ENCODE measurements at regions of chr19 and their contacts with region 1.

Region 1: DNA sequence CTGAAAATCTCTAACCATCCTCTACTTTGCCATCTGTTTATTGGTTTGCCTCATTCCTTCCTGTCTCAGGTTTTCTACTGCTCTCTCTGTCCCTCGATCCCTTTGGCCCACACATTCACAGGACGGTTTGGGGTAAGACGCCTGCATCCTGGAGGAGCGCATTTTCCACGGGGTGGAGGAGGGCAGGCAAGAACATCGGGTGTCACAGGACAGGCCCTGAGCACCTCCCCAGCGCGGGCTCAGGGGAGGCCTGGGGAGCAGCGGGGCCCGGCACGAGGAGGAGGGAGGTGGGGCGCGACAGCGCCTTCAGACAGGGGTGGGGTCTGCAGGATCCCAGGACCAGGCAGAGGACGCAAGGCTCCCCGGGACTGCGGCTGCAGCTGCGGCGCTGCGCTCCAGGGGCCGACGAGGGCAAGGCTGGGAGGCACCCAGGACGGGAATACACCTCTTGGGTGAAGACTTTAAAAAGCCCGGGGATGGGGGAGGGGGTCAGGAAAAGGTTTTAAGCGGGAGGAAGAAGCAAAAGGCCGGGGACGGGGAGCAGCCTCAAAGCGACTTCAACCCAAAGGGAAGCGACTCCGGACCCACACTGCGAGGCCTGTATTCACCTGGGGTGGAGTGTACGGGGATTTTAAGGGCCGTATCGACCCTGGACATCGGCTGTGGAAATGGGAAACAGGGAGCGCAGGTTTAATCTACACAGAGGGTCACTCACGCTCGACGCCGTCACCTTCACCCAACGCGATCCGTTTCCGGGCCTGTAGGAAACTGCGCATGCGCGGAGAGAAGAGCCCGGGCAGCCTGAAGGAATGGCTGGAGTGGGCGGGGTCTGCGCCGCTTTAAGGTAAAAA is at the start of gene ZNF415:
- DNase-seq: peak; percentile 87 to 89
- ATAC-seq: peak; percentile 90 to 96 (median 95)
- H3K4me3 ChIP-seq: peak within 1 kb of the TSS; percentile 44 to 75 (median 66)
- H3K27ac ChIP-seq: peak within 1 kb of the TSS; percentile 34 to 92 (median 86)
- H3K4me1 ChIP-seq: peaks cover 9 to 29% (median 22%) of the 10 kb centered on the region in 9 donors
- H3K27me3 ChIP-seq: peaks cover 0 to 3% (median 0%) of the 10 kb centered on the region in 7 donors
- CTCF ChIP-seq: no peak
- total RNA-seq, gene ZNF415: 18.7 to 32.5 (median 22.8) TPM

Region 2: GRCh38 chr19:53076977-53077376 is 55.4 kb before region 1 on chr19:
- intact Hi-C with region 1: loop called in 2 of 10 experiments (anchors 2 to 5 kb)
- DNase-seq: peak; percentile 55 to 63
- ATAC-seq: peak in 7 of 8 donors; percentile 32 to 84 (median 76)
- H3K4me3 ChIP-seq: no peak overlapping the region
- H3K27ac ChIP-seq: peak overlapping the region in 4 of 10 donors; percentile 34 to 72 (median 62)
- H3K4me1 ChIP-seq: peaks cover 0 to 38% (median 4%) of the 10 kb centered on the region in 9 donors
- H3K27me3 ChIP-seq: no peaks in the 10 kb centered on the region
- CTCF ChIP-seq: peak; percentile 63 to 85 (median 78)

Region 3: GRCh38 chr19:53103198-53103944 is 29.0 kb before region 1 on chr19 and contains the start of gene ZNF160:
- intact Hi-C with region 1: loop called in 4 of 10 experiments (anchors 2 kb)
- DNase-seq: peak; percentile 100
- ATAC-seq: peak; percentile 99
- H3K4me3 ChIP-seq: peak within 1 kb of the TSS; percentile 75 to 97 (median 85)
- H3K27ac ChIP-seq: peak within 1 kb of the TSS; percentile 84 to 98 (median 94)
- H3K4me1 ChIP-seq: peaks cover 9 to 46% (median 25%) of the 10 kb centered on the region in 9 donors
- H3K27me3 ChIP-seq: no peaks in the 10 kb centered on the region
- CTCF ChIP-seq: no peak
- total RNA-seq, gene ZNF160: 9.8 to 22.9 (median 18.5) TPM

Region 4: GRCh38 chr19:53147645-53148044 is 15.3 kb after region 1 on chr19:
- intact Hi-C with region 1: loop called in 1 of 10 experiments (anchors 2 kb)
- DNase-seq: no peak
- ATAC-seq: no peak
- H3K4me3 ChIP-seq: no peak overlapping the region
- H3K27ac ChIP-seq: no peak overlapping the region
- H3K4me1 ChIP-seq: no peaks in the 10 kb centered on the region
- H3K27me3 ChIP-seq: no peaks in the 10 kb centered on the region
- CTCF ChIP-seq: no peak

Region 5: DNA sequence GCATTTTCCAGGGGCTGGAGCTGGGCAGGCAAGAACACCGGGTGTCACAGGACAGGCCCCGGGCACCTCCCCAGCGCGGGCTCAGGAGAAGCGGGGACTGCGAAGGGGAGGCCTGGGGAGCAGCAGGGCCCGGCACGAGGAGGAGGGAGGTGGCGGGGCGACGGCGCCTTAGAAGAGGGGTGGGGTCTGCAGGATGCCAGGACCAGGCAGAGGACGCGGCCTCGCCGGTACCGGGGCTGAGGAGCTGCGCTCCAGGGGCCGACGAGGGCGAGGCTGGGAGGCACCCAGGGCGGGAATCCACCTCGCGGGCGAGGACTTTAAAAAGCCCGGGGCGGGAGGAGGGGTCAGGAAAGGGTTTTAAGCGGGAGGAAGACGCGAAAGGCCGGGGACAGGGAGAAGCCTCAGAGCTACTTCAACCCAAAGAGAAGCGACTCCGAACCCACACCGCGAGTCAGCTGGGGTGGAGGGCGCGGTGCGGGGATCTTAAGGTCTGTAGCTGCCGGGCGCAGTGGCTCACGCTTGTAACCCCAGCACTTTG is 25.8 kb after region 1 on chr19:
- intact Hi-C with region 1: loop called in 2 of 10 experiments (anchors 1 kb)
- DNase-seq: peak; percentile 23 to 47
- ATAC-seq: peak; percentile 31 to 68 (median 50)
- H3K4me3 ChIP-seq: peak overlapping the region; percentile 65 to 84 (median 74)
- H3K27ac ChIP-seq: peak overlapping the region; percentile 66 to 85 (median 80)
- H3K4me1 ChIP-seq: peaks cover 0 to 26% (median 18%) of the 10 kb centered on the region in 9 donors
- H3K27me3 ChIP-seq: no peaks in the 10 kb centered on the region
- CTCF ChIP-seq: no peak